K562 (cell line): ENCODE measurements at regions of chr3 and their contacts with region 1.

Region 1: GRCh38 chr3:13346481-13347389 is 73.4 kb downstream of the NUP210 start:
- DNase-seq: no peak
- ATAC-seq: no peak
- H3K4me3 ChIP-seq: no peak overlapping the region
- H3K27ac ChIP-seq: no peak overlapping the region
- H3K4me1 ChIP-seq: peaks cover 0 to under 1% of the 10 kb centered on the region in 2 experiments; a peak in 1 of 5 replicates
- H3K27me3 ChIP-seq: no peaks in the 10 kb centered on the region
- CTCF ChIP-seq: no peak
- EP300 ChIP-seq: no peak
- POLR2A ChIP-seq: no peak
- RAD21 ChIP-seq: no peak

Region 2: GRCh38 chr3:13324835-13325501 is 21.8 kb before region 1 on chr3:
- CTCF ChIA-PET with region 1: no interaction called
- POLR2A ChIA-PET with region 1: interaction called, 20 read pairs
- in situ Hi-C with region 1: no loop called
- intact Hi-C with region 1: no loop called
- DNase-seq: no peak
- ATAC-seq: no peak
- H3K4me3 ChIP-seq: no peak overlapping the region
- H3K27ac ChIP-seq: no peak overlapping the region
- H3K4me1 ChIP-seq: no peaks in the 10 kb centered on the region; a peak in 1 of 5 replicates
- H3K27me3 ChIP-seq: no peaks in the 10 kb centered on the region
- CTCF ChIP-seq: no peak
- EP300 ChIP-seq: no peak
- POLR2A ChIP-seq: no peak
- RAD21 ChIP-seq: no peak